A673 (cell line): ENCODE measurements at regions of chr4 and their contacts with region 1.

Region 1: DNA sequence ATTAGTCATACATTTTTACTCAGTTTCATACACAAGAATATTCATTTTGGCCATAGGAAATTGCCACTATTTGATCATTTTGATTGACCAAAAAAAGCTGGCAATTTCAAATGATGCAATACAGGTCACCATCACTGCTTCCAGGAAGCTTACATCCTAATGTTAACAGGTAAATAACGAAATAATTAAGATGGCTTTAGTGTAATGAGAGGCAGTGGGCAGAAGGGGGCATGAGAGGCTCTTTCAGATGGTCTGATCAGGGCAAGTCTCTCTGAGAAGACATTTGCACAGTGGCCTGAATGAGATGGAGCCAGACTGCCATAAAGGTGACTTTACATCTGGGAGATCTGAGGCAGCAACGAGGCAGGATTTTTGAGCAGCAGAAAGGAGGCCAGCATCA is 170.7 kb downstream of the SLIT2 start:
- DNase-seq: peak; percentile 70
- H3K4me3 ChIP-seq: no peak overlapping the region
- H3K27ac ChIP-seq: no peak overlapping the region
- H3K4me1 ChIP-seq: peaks cover 31% of the 10 kb centered on the region
- H3K27me3 ChIP-seq: no peaks in the 10 kb centered on the region
- CTCF ChIP-seq: peak; percentile 68

Region 2: GRCh38 chr4:19224820-19225219 is 1197.6 kb before region 1 on chr4:
- CTCF ChIA-PET with region 1: no interaction called
- POLR2A ChIA-PET with region 1: no interaction called
- intact Hi-C with region 1: loop called (anchors 10 kb)
- DNase-seq: peak; percentile 62
- H3K4me3 ChIP-seq: no peak overlapping the region
- H3K27ac ChIP-seq: no peak overlapping the region
- H3K4me1 ChIP-seq: no peaks in the 10 kb centered on the region
- H3K27me3 ChIP-seq: no peaks in the 10 kb centered on the region
- CTCF ChIP-seq: peak; percentile 56

Region 3: GRCh38 chr4:20354120-20354519 is 68.3 kb before region 1 on chr4:
- CTCF ChIA-PET with region 1: no interaction called
- POLR2A ChIA-PET with region 1: no interaction called
- intact Hi-C with region 1: loop called (anchors 5 kb)
- DNase-seq: peak; percentile 91
- H3K4me3 ChIP-seq: no peak overlapping the region
- H3K27ac ChIP-seq: peak overlapping the region; percentile 53
- H3K4me1 ChIP-seq: peaks cover 54% of the 10 kb centered on the region
- H3K27me3 ChIP-seq: no peaks in the 10 kb centered on the region
- CTCF ChIP-seq: peak; percentile 30; the same call in 1 of the 2 replicates

Region 4: DNA sequence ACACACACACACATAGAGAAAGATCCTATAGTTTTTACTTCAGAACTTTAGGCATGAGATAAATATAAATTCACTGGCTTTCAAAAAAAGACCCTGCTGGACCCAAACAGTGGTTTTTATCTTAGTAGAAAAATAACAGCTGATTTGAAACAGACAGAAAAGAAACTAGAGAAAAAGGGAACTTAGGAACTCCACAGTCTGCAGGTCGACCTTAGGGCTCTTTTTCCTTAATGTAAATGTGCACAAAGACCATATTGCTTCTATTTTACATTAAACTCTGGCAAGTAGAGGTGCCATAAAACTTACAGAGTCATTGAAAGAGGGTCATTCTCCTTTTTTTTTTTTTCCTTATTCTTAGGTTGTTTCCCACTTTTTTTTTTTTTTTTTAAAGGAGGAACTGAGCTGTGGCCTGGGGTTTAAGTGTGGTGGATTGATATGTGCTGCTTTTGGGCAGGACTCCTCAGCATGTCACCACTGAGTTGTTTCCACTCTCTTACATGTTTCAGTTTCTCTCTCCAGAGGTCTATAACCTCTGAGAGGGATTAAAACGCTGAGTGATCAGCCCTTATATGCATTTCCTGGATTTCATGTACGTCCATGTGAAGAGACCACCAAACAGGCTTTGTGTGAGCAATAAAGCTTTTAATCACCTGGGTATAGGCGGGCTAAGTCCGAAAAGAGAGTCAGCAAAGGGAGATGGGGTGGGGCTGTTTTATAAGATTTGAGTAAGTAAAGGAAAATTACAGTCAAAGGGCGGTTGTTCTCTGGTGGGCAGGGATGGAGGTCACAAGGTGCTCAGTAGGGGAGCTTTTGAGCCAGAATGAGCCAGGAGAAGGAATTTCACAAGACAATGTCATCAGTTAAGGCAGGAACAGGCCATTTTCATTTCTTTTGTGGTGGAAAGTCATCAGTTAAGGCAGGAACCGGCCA is 207.1 kb after region 1 on chr4:
- CTCF ChIA-PET with region 1: no interaction called
- POLR2A ChIA-PET with region 1: no interaction called
- intact Hi-C with region 1: no loop called
- DNase-seq: no peak
- H3K4me3 ChIP-seq: no peak overlapping the region
- H3K27ac ChIP-seq: no peak overlapping the region
- H3K4me1 ChIP-seq: no peaks in the 10 kb centered on the region
- H3K27me3 ChIP-seq: no peaks in the 10 kb centered on the region
- CTCF ChIP-seq: no peak

Region 5: GRCh38 chr4:20684852-20685763 is 262.7 kb after region 1 on chr4:
- CTCF ChIA-PET with region 1: interaction called, 3 read pairs
- POLR2A ChIA-PET with region 1: no interaction called
- intact Hi-C with region 1: loop called (anchors 2 kb)
- DNase-seq: peak; percentile 57
- H3K4me3 ChIP-seq: no peak overlapping the region
- H3K27ac ChIP-seq: no peak overlapping the region
- H3K4me1 ChIP-seq: no peaks in the 10 kb centered on the region
- H3K27me3 ChIP-seq: no peaks in the 10 kb centered on the region
- CTCF ChIP-seq: peak; percentile 71